ENCODE measurements at regions of chr18 and their contacts with region 1.

Region 1: GRCh38 chr18:41767960-41768359 is 187.1 kb upstream of the PIK3C3 start:
- DNase-seq: no peak
- H3K4me3 ChIP-seq: no peak overlapping the region
- H3K27ac ChIP-seq: no peak overlapping the region
- H3K4me1 ChIP-seq: no peaks in the 10 kb centered on the region
- H3K27me3 ChIP-seq: no peaks in the 10 kb centered on the region
- CTCF ChIP-seq: no peak
- EP300 ChIP-seq: no peak
- POLR2A ChIP-seq: no peak

Region 2: DNA sequence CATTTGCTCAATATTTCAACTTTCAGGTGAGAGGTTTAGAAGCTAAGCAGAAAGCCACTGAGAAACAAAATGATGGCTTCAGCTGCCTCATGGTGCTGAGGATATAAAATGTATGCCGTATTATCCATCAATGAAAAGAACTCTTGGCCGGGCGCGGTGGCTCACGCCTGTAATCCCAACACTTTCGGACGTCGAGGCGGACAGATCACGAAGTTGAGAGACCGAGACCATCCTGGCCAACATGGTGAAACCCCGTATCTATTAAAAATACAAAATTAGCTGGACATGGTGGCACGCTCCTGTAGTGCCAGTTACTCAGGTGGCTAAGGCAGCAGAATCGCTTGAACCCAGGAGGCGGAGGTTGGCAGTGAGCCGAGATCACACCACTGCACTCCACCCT is 1515.3 kb after region 1 on chr18:
- in situ Hi-C with region 1: no loop called
- intact Hi-C with region 1: loop called (anchors 10 kb)
- DNase-seq: no peak
- H3K4me3 ChIP-seq: no peak overlapping the region
- H3K27ac ChIP-seq: no peak overlapping the region
- H3K4me1 ChIP-seq: no peaks in the 10 kb centered on the region
- H3K27me3 ChIP-seq: peaks cover 2% of the 10 kb centered on the region
- CTCF ChIP-seq: no peak
- EP300 ChIP-seq: no peak
- POLR2A ChIP-seq: no peak